ENCODE measurements at regions of chr16 and their contacts with region 1.

Region 1: DNA sequence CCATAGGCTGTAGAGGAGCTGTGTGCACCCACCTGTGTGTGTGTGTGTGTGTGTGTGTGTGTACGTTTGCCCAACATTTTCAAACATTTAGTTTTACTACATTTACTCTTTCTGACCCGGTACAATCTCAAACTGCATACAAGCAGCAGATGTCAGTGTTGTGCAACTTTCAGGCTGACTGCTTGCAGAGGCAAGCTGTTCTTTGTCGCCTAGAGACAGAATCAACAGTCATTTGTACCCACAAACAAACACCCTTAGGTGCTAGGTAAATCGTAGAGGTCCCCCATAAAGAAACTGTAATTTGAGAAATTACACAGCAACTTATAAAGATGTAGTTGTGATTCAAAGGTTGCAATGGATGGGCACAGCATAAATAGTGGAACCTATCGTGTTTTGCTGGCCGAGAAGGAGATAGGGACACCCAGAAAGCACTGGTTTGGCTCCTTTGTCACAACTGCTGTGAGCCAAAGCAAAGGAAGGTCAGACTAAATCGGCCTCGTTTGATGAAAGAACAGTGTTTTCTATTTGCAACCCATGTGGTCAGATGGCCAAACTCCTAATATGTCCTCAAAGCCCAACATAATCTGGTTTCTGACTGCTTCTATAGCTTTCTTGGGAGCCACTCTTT is 478.4 kb downstream of the TOX3 start:
- DNase-seq: peak; percentile 44
- ATAC-seq: peak; percentile 58; the same call in 1 of the 2 replicates
- H3K4me3 Mint-ChIP-seq: no peak overlapping the region
- H3K27ac Mint-ChIP-seq: no peak overlapping the region
- H3K4me1 Mint-ChIP-seq: peaks cover 3% of the 10 kb centered on the region
- H3K27me3 Mint-ChIP-seq: no peaks in the 10 kb centered on the region
- CTCF ChIP-seq: no peak

Region 2: DNA sequence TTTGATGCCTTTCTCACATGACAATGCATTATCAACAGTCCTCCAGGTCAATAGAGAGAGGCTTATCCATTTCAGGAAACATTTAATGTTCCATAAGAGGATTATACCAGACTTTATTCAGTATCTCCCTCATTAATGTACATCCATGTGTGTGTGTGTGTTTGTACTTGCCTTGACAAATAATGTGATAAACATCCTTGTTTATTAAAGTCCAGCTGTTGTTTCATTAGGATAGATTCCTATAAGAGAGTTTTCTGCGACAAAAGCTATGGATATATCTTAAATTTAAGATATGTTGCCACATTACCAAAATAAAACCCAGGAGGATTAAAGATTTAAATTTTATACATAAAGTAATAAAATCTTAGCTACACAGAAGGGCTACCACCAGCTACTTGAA is 14.2 kb before region 1 on chr16:
- CTCF ChIA-PET with region 1: interaction called, 15 read pairs
- POLR2A ChIA-PET with region 1: no interaction called
- DNase-seq: no peak
- ATAC-seq: no peak
- H3K4me3 Mint-ChIP-seq: no peak overlapping the region
- H3K27ac Mint-ChIP-seq: no peak overlapping the region
- H3K4me1 Mint-ChIP-seq: 0 out of 2 replicates have a peak, but pooled peaks cover 2% of the 10 kb centered on the region
- H3K27me3 Mint-ChIP-seq: no peaks in the 10 kb centered on the region; the same call in 1 of the 2 replicates
- CTCF ChIP-seq: no peak

Region 3: DNA sequence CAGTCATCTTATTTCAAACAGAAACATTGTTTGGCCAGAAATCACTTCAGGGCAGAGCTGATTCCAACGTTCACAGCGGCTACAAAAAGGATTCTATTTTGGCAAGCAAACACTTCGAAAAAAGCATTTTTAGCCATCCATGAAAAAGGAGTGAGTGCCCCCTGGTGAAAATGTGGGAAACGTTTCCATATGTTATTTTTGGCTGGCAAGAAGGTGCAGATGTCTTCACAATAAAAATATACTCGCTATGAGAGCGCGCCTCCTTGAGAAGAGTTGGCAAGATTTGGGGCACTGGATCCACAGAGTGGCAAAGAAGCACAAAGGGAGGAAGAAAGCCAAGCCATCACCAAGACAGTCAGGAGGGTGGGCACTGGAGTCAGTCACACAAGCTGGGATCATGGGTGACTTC is 793.1 kb after region 1 on chr16:
- CTCF ChIA-PET with region 1: interaction called, 21 read pairs
- POLR2A ChIA-PET with region 1: no interaction called
- DNase-seq: peak; percentile 17
- ATAC-seq: no peak; the same call in 1 of the 2 replicates
- H3K4me3 Mint-ChIP-seq: no peak overlapping the region
- H3K27ac Mint-ChIP-seq: no peak overlapping the region
- H3K4me1 Mint-ChIP-seq: peaks cover 14% of the 10 kb centered on the region
- H3K27me3 Mint-ChIP-seq: no peaks in the 10 kb centered on the region; the same call in 1 of the 2 replicates
- CTCF ChIP-seq: 0 out of 2 replicates have a peak, but pooled peaks have one; percentile 34

Region 4: DNA sequence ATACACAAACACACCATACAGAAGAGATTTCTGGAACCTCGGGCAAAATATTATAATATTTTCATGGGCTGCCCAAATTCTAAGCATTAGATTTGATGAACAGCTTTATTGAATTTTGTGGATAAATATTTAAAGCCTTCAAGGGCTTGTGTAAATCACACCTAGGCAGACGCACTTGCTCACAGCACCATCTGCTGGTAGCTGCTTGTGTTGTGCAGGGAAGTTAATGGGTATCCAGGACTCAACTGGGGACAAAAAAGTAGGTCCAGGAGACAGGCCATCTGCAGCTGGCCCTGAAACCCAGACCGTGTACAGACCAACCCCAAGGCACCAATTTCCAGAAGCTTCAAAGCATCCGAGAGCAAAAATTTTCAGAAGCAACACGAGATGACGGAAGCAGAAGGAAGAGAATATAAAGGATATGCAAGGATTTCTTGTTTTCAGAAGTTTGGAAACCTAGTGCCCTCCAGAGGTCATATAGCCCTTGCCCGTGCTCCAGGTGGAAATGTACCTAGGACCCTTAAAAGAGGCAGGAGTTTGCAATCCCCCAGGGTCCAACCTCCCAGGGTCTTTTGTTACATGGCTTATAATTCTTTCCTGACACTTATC is 844.1 kb after region 1 on chr16:
- CTCF ChIA-PET with region 1: interaction called, 53 read pairs
- POLR2A ChIA-PET with region 1: no interaction called
- DNase-seq: peak; percentile 83
- ATAC-seq: peak; percentile 93
- H3K4me3 Mint-ChIP-seq: no peak overlapping the region
- H3K27ac Mint-ChIP-seq: no peak overlapping the region
- H3K4me1 Mint-ChIP-seq: peaks cover 6% of the 10 kb centered on the region
- H3K27me3 Mint-ChIP-seq: no peaks in the 10 kb centered on the region
- CTCF ChIP-seq: peak; percentile 65